Colonic mucosa (tissue), 4 donors: ENCODE measurements at regions of chr22 and their contacts with region 1.

Region 1: GRCh38 chr22:28855355-28856094 is 27.8 kb upstream of the ZNRF3 start:
- DNase-seq: peak; percentile 76
- H3K4me3 ChIP-seq: no peak overlapping the region
- H3K27ac ChIP-seq: no peak overlapping the region
- H3K4me1 ChIP-seq: no peaks in the 10 kb centered on the region
- H3K27me3 ChIP-seq: no peaks in the 10 kb centered on the region
- CTCF ChIP-seq: peak; percentile 93

Region 2: GRCh38 chr22:29154364-29155048 is 299.0 kb after region 1 on chr22:
- intact Hi-C with region 1: loop called (anchors 10 kb)
- DNase-seq: peak; percentile 74
- H3K4me3 ChIP-seq: no peak overlapping the region
- H3K27ac ChIP-seq: no peak overlapping the region
- H3K4me1 ChIP-seq: no peaks in the 10 kb centered on the region
- H3K27me3 ChIP-seq: no peaks in the 10 kb centered on the region
- CTCF ChIP-seq: peak; percentile 95

Region 3: GRCh38 chr22:29245637-29246385 is 390.3 kb after region 1 on chr22:
- intact Hi-C with region 1: loop called (anchors 10 kb)
- DNase-seq: peak; percentile 69
- H3K4me3 ChIP-seq: no peak overlapping the region
- H3K27ac ChIP-seq: no peak overlapping the region
- H3K4me1 ChIP-seq: no peaks in the 10 kb centered on the region
- H3K27me3 ChIP-seq: no peaks in the 10 kb centered on the region
- CTCF ChIP-seq: peak; percentile 97